PC-3 (cell line): ENCODE measurements at regions of chr6 and their contacts with region 1.

Region 1: GRCh38 chr6:46993846-46994245 is 48.3 kb downstream of the ADGRF1 start:
- DNase-seq: peak; percentile 98
- ATAC-seq: peak; percentile 76
- H3K4me3 ChIP-seq: no peak overlapping the region
- H3K27ac ChIP-seq: peak overlapping the region; percentile 84
- H3K4me1 ChIP-seq: peaks cover 73% of the 10 kb centered on the region
- H3K27me3 ChIP-seq: no peaks in the 10 kb centered on the region
- CTCF ChIP-seq: no peak

Region 2: DNA sequence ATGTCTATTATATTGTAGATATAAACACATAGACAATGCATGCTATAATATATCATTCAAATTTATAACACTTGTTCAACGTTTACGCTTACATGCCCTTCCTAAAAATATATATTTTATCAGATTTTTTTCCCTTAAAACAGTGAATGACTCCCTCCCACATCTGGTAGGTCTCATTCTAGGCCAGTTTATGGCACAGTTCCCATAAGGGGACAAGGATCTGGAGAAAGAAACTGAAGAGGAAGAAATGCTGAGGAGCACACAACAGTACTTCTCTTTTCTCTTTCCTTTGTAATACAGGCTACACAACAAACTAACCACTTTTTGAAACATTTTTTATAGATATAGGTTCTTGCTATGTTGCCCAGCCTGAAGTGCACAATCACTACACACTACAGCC is 454.0 kb before region 1 on chr6:
- CTCF ChIA-PET with region 1: interaction called, 10 read pairs
- POLR2A ChIA-PET with region 1: no interaction called
- intact Hi-C with region 1: no loop called
- DNase-seq: no peak
- ATAC-seq: no peak
- H3K4me3 ChIP-seq: no peak overlapping the region
- H3K27ac ChIP-seq: no peak overlapping the region
- H3K4me1 ChIP-seq: no peaks in the 10 kb centered on the region
- H3K27me3 ChIP-seq: peaks cover 37% of the 10 kb centered on the region
- CTCF ChIP-seq: no peak

Region 3: DNA sequence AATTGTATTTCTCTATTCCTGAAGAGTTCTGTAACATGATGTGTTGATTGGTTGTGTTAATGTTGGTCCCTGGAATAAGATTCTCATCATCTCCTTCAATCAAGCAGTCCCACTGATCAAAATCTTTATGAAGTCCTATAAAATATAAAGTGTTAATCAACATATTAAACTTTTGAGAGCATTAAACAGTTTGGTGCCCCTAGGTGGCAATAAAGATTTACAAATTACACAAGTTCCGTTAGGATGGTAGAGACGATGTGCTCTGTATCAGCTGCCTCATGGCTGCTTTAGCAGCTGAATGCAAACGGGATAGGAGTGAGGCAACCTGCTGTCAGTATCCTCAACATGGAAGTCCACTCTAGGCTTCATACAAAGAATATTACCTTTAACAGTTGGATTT is 289.3 kb before region 1 on chr6:
- CTCF ChIA-PET with region 1: no interaction called
- POLR2A ChIA-PET with region 1: no interaction called
- intact Hi-C with region 1: loop called (anchors 1 kb)
- DNase-seq: peak; percentile 80
- ATAC-seq: peak; percentile 90
- H3K4me3 ChIP-seq: no peak overlapping the region
- H3K27ac ChIP-seq: no peak overlapping the region
- H3K4me1 ChIP-seq: peaks cover 10% of the 10 kb centered on the region
- H3K27me3 ChIP-seq: no peaks in the 10 kb centered on the region
- CTCF ChIP-seq: peak; percentile 76

Region 4: DNA sequence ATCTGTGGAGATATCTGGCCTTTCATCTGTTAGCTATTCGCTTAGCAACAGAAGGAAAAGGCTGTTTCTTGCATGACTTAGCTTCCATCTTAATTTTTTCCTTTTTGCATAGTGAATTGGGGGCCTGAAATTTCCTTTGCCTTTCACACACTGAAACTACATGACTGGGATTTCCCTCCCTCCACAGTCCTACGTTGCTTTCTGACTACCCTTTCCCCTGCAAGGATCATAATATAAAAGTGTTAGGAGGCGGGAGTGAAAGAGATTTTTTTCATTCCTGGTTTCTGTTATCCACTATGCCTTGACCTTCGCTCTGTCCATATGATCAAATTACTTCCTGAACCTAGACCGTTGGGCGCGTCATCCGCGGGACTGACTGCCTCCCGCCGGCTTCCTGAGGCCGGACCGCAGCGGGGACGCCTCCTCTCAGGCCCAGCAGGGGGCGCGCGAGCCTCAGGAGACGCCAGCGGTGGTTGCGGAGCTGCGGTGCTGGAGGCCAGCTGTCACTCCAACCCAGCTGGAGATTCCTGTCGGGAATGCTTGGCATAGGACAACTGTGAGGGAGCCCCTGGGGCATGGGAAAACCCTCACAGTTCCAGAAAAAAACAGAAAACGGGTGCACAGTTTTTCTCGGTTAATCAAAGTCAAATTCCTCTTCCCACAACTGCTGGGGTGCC is 145.0 kb before region 1 on chr6:
- CTCF ChIA-PET with region 1: interaction called, 16 read pairs
- POLR2A ChIA-PET with region 1: no interaction called
- intact Hi-C with region 1: loop called (anchors 1 kb)
- DNase-seq: peak; percentile 94
- ATAC-seq: peak; percentile 93
- H3K4me3 ChIP-seq: peak overlapping the region; percentile 46; the same call in 1 of the 2 replicates
- H3K27ac ChIP-seq: peak overlapping the region; percentile 70
- H3K4me1 ChIP-seq: peaks cover 32% of the 10 kb centered on the region
- H3K27me3 ChIP-seq: no peaks in the 10 kb centered on the region
- CTCF ChIP-seq: peak; percentile 97

Region 5: DNA sequence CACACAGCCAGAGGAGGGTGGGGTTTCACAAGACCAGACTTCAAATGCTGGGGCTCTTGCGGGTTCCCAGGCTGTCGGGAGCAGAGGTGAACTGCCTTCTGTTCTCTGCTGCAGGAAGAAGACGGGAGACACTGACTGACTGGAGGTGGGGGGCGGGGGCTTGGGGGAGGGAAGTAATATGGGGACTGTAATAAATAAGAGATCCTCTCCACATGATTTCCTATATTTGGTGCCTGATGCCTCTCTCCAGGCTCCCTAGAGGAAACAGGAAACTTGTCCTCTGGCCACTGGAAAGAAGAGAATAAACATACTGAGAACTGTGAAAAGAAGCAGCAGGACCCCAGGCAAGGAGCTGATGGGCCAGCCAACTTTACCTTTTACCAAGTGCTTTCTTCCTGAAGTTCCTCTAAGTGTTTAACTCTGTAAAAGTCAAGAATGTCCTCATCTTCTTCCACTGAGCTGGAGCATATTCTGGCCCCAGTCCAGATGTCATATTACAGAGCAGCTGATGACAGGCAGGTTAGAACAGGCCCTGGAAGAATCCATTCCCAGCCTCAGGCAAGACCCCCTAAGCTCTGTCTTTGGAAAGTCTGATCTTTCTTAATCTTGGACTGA is 38.9 kb before region 1 on chr6:
- CTCF ChIA-PET with region 1: no interaction called
- POLR2A ChIA-PET with region 1: no interaction called
- intact Hi-C with region 1: no loop called
- DNase-seq: no peak
- ATAC-seq: no peak
- H3K4me3 ChIP-seq: no peak overlapping the region
- H3K27ac ChIP-seq: no peak overlapping the region
- H3K4me1 ChIP-seq: no peaks in the 10 kb centered on the region
- H3K27me3 ChIP-seq: no peaks in the 10 kb centered on the region
- CTCF ChIP-seq: no peak

Region 6: GRCh38 chr6:46972531-46972930 is 21.3 kb before region 1 on chr6:
- CTCF ChIA-PET with region 1: no interaction called
- POLR2A ChIA-PET with region 1: no interaction called
- intact Hi-C with region 1: no loop called
- DNase-seq: no peak
- ATAC-seq: no peak; the same call in 1 of the 2 replicates
- H3K4me3 ChIP-seq: no peak overlapping the region
- H3K27ac ChIP-seq: 0 out of 2 replicates have a peak overlapping the region, but pooled peaks have one; percentile 17
- H3K4me1 ChIP-seq: peaks cover 27% of the 10 kb centered on the region
- H3K27me3 ChIP-seq: no peaks in the 10 kb centered on the region
- CTCF ChIP-seq: no peak

Region 7: GRCh38 chr6:46983007-46983411 is 10.8 kb before region 1 on chr6:
- CTCF ChIA-PET with region 1: interaction called, 4 read pairs
- POLR2A ChIA-PET with region 1: no interaction called
- intact Hi-C with region 1: loop called (anchors 1 kb)
- DNase-seq: peak; percentile 98
- ATAC-seq: peak; percentile 86
- H3K4me3 ChIP-seq: no peak overlapping the region
- H3K27ac ChIP-seq: peak overlapping the region; percentile 91
- H3K4me1 ChIP-seq: peaks cover 62% of the 10 kb centered on the region
- H3K27me3 ChIP-seq: no peaks in the 10 kb centered on the region
- CTCF ChIP-seq: peak; percentile 54

Region 8: DNA sequence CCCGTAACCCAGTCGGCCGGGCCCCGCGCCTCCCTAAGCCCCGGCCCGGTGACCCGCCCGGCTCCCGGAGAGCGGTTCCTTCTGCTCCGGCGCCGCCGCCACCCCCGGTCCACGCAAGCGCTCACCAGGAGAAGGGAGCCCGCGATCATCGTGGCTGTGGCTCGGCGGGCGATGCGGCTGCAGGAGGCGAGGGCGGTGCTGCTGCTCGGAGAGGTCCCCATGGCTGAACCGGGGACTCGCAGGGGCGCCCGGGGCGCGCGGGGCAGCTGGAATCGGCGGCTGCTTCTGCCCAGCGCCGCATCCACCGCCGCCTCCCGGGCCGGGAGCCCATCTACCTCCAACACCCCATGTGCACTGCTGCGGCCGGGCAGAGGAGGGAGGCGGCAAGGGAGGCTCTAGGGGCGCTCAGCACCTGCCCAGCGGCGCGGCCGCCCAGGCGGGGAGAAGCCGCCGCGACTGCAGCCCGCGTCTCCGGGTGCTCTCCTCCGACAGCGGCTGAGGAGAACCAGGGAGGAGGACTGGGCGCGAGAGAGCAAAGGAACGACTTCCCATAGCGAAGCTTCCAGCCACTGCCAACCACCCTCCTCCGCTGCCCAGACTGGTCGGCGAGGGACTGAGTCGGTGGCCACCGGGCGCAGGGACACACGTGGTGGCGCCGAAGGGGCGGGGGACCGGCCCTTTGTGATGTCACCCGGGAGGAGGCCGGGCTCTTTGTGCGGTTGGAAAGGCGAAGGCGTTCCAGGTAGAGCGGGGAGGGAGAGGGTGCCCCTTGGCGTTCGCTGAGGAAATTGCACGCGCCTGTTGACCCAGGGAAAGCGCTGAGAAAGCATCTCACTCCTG is 315.7 kb after region 1 on chr6 and contains the start of gene TNFRSF21:
- CTCF ChIA-PET with region 1: no interaction called
- POLR2A ChIA-PET with region 1: no interaction called
- intact Hi-C with region 1: loop called (anchors 5 kb)
- DNase-seq: peak; percentile 95
- ATAC-seq: peak; percentile 89
- H3K4me3 ChIP-seq: peak within 1 kb of the TSS; percentile 95
- H3K27ac ChIP-seq: peak within 1 kb of the TSS; percentile 81
- H3K4me1 ChIP-seq: peaks cover 33% of the 10 kb centered on the region
- H3K27me3 ChIP-seq: no peaks in the 10 kb centered on the region
- CTCF ChIP-seq: peak; percentile 85
- total RNA-seq, gene TNFRSF21: 106 and 120 TPM in 2 replicates